Panc1 (cell line): ENCODE measurements at regions of chr2 and their contacts with region 1.

Region 1: GRCh38 chr2:226995625-226996041 is 159.8 kb downstream of the RHBDD1 start:
- DNase-seq: no peak
- ATAC-seq: no peak
- H3K4me3 ChIP-seq: no peak overlapping the region
- H3K27ac ChIP-seq: no peak overlapping the region
- H3K4me1 ChIP-seq: no peaks in the 10 kb centered on the region
- H3K27me3 ChIP-seq: no peaks in the 10 kb centered on the region
- CTCF ChIP-seq: no peak

Region 2: GRCh38 chr2:226478109-226478809 is 517.4 kb before region 1 on chr2:
- CTCF ChIA-PET with region 1: no interaction called
- POLR2A ChIA-PET with region 1: interaction called, 15 read pairs
- in situ Hi-C with region 1: no loop called
- intact Hi-C with region 1: no loop called
- DNase-seq: no peak
- ATAC-seq: peak; percentile 98
- H3K4me3 ChIP-seq: no peak overlapping the region
- H3K27ac ChIP-seq: peak overlapping the region; percentile 91
- H3K4me1 ChIP-seq: peaks cover 28% of the 10 kb centered on the region
- H3K27me3 ChIP-seq: no peaks in the 10 kb centered on the region
- CTCF ChIP-seq: no peak

Region 3: GRCh38 chr2:226564667-226565066 is 431.0 kb before region 1 on chr2:
- CTCF ChIA-PET with region 1: no interaction called
- POLR2A ChIA-PET with region 1: no interaction called
- in situ Hi-C with region 1: no loop called
- intact Hi-C with region 1: no loop called
- DNase-seq: no peak
- ATAC-seq: no peak
- H3K4me3 ChIP-seq: no peak overlapping the region
- H3K27ac ChIP-seq: no peak overlapping the region
- H3K4me1 ChIP-seq: no peaks in the 10 kb centered on the region
- H3K27me3 ChIP-seq: no peaks in the 10 kb centered on the region
- CTCF ChIP-seq: no peak